BJ (cell line): ENCODE measurements at regions of chrX and their contacts with region 1.

Region 1: DNA sequence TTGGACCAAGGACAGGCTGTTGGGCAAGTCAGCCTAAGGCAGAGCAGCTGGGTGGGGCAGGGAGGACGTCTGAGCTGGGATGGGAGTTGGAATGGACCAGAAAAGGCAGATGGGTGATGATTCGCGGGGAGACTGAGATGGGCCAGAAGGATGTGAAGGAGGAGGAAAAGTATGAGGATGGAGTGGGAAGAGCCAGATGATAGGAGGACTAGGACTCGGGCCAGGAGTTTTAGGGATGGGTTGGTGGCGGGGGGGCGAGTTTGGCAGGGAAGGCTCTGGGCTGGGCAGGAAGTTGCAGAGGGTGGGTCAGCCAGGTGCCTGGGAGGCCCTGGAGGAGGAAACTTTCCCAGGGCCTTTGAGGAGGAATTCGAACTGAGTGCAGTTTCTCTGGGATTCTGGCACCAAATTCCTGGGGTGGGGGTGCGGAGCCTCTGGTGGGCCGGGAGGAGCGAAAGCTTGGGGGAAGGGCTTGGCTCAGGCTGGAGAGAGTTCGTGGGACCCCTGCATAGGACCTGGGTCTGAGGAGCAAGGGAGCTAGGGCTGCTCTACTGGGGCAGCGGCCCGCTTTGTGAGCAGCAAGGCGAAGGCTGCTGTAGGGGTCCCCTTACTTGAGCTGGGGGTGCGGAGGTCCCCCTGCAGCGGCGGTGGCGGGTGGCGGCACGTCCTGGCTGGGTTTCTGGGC is 8.7 kb upstream of the TIMP1 start:
- DNase-seq: peak; percentile 43
- H3K4me3 ChIP-seq: peak overlapping the region; percentile 27
- H3K27me3 ChIP-seq: no peaks in the 10 kb centered on the region
- CTCF ChIP-seq: no peak

Region 2: GRCh38 chrX:47456080-47456479 is 117.5 kb before region 1 on chrX:
- CTCF ChIA-PET with region 1: no interaction called
- POLR2A ChIA-PET with region 1: no interaction called
- DNase-seq: no peak
- H3K4me3 ChIP-seq: no peak overlapping the region
- H3K27me3 ChIP-seq: no peaks in the 10 kb centered on the region
- CTCF ChIP-seq: no peak

Region 3: GRCh38 chrX:47561653-47562151 is 11.8 kb before region 1 on chrX:
- CTCF ChIA-PET with region 1: no interaction called
- POLR2A ChIA-PET with region 1: interaction called, 12 read pairs
- DNase-seq: no peak
- H3K4me3 ChIP-seq: peak overlapping the region; percentile 69
- H3K27me3 ChIP-seq: no peaks in the 10 kb centered on the region
- CTCF ChIP-seq: no peak